ENCODE measurements at regions of chr1 and their contacts with region 1.

Region 1: DNA sequence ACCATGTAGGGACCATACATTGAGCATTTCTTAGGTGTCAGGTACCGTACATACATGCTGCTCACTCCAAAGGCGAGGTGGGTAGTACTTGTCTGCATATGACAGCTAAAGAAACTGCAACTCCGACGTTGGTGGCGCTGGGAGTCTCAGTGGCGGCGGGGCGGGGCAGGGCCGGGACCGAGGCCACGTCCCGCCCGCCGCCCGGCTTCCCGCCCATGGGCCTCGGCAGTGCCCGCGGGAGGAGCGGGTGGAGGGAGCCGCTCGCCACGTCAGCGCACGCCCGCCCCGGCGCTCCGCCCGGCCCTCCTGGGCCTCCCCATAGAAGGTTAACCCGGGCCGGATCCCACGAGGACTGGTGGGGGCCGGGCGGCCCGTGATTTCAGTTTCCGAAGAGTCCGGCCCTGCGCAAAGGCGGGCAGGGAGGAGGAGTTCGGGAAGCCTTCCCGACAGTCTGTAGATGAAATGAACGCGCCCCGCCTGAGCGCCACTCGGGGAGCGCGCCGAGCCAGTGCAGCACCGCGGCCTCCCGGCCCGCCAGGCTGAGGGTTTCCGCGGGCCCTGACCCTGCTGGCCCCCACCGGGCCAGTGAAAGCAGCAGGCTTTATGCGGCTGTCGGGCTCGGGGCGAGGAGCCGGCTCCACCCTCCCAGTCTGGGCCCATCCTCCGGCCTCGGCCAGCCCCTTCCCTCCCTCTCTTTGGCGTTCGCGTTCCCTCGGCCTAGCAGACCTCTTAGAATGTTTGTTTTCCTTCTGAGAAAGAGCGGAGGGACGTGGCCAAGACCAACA is 119.9 kb upstream of the JUN start:
- DNase-seq: peak; percentile 81
- H3K4me3 Mint-ChIP-seq: peak overlapping the region; percentile 76
- H3K27ac Mint-ChIP-seq: peak overlapping the region; percentile 87
- H3K4me1 Mint-ChIP-seq: peaks cover 32% of the 10 kb centered on the region
- H3K27me3 Mint-ChIP-seq: no peaks in the 10 kb centered on the region

Region 2: GRCh38 chr1:58546520-58547308 is 357.0 kb before region 1 on chr1 and contains the start of gene OMA1:
- intact Hi-C with region 1: loop called (anchors 10 kb)
- DNase-seq: peak; percentile 97
- H3K4me3 Mint-ChIP-seq: peak within 1 kb of the TSS; percentile 91
- H3K27ac Mint-ChIP-seq: peak within 1 kb of the TSS; percentile 95
- H3K4me1 Mint-ChIP-seq: peaks cover 19% of the 10 kb centered on the region
- H3K27me3 Mint-ChIP-seq: peaks cover 15% of the 10 kb centered on the region
- total RNA-seq, gene OMA1: 12.9 and 13.0 TPM in 2 replicates

Region 3: DNA sequence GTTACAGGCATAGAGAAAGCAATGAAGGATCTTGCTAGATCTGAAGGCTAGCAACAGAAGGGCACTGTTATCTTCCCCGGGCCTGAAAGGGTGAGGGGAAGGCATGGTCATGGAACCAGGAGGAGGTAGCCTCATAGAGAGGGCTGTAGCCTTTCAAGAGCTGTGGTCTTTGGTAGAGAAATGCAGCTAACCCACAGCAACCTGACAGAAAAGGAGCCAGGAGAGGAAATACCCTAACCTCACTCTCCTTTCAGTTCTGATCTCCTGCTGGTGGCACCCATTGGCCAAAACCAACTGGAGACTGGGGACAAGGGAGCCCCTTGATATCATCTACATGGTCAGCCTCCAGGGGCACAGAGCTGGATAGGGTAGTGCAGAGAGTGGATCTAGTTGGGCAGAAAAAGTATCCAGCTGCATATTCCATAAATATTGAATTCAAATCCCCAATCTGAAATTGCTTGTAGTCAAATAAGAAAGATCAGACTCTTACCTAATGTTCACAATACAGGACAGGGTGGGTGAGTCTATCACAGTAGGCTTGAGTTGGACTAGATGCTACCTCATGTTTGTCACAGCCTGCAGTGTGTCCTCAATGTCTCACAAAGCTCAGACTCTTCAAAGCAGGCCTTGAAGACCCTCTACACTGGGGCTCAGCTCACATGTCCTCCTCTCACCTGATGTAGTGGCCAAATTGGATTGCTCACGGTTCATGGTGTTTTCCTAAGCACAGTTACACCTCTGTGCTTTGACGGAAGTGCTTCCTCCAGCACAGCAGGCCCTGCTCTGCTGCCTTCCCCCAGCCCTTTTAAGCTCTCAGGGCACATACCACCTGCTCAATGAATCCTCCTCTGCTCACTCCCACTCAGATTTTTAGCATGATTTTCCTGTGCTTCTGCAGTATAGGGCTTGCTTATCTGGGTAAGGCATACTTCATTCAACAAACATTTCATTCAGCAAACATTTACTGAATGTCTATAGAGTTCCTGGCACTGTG is 45.7 kb before region 1 on chr1:
- intact Hi-C with region 1: loop called (anchors 5 kb)
- DNase-seq: peak; percentile 43
- H3K4me3 Mint-ChIP-seq: peak overlapping the region; percentile 61
- H3K27ac Mint-ChIP-seq: peak overlapping the region; percentile 95
- H3K4me1 Mint-ChIP-seq: peaks cover 74% of the 10 kb centered on the region
- H3K27me3 Mint-ChIP-seq: no peaks in the 10 kb centered on the region

Region 4: DNA sequence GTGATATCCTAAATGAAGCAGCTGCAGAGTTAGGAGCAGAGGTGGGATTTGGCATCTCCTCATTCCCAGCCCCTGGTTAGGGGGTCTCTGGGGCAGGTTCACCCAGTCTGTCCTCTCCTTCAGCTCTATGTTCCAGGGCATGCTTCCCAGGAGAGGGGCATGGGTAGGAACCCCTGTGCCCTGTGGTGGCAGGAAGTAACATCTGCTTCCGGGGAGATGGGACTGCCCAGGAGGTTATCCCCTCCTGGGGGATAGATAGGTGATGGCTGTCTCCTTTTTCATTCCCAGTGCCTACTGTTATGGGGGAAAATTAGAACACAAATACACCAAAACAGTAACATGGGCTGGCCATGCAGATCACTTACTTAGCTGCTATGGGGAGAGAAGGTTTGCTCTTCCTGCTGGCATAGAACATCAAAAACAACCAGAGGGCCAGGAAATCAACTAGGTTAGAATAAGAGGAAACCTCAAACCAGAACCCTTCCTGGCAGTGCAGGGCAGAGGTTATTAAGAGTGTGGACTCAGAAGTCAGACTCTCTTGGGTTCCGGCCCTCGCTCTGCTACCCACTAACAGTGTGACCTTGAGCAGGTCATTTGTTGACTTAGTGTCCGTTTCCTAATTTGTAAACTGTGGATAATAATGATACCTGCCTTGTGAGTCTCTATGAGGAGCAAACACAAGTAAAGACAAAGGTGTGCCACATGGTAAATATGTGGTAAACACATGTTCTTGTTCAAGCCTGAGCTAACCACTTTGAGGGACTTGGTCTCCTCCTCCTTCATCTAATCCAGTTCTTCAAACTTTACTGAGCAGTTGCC is 38.0 kb after region 1 on chr1:
- intact Hi-C with region 1: loop called (anchors 1 kb)
- DNase-seq: peak; percentile 46
- H3K4me3 Mint-ChIP-seq: peak overlapping the region; percentile 60
- H3K27ac Mint-ChIP-seq: peak overlapping the region; percentile 85
- H3K4me1 Mint-ChIP-seq: peaks cover 77% of the 10 kb centered on the region
- H3K27me3 Mint-ChIP-seq: no peaks in the 10 kb centered on the region

Region 5: DNA sequence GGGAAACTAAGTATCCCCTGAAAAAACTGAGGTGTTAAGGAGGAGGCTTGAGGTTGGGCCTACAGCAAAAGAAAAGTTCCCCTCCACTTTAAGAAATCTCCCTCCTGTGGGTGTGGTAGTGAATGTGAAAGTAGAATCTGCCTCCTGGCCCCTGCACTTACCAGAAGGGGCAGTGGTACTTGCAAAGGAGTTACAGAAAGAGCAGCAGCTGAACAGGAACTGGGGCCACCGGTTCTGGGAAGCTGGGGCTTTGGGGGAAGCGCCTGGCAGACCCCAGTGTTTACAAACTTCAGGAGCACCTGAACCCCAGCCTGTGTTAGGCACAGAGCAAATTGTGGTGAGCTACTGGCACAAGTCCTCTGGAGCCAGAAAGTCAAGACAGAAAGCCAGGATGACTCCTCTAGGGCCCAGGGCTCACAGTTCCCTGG is 143.0 kb after region 1 on chr1:
- intact Hi-C with region 1: loop called (anchors 1 kb)
- DNase-seq: peak; percentile 62
- H3K4me3 Mint-ChIP-seq: peak overlapping the region; percentile 67
- H3K27ac Mint-ChIP-seq: peak overlapping the region; percentile 71
- H3K4me1 Mint-ChIP-seq: peaks cover 77% of the 10 kb centered on the region
- H3K27me3 Mint-ChIP-seq: no peaks in the 10 kb centered on the region

Region 6: DNA sequence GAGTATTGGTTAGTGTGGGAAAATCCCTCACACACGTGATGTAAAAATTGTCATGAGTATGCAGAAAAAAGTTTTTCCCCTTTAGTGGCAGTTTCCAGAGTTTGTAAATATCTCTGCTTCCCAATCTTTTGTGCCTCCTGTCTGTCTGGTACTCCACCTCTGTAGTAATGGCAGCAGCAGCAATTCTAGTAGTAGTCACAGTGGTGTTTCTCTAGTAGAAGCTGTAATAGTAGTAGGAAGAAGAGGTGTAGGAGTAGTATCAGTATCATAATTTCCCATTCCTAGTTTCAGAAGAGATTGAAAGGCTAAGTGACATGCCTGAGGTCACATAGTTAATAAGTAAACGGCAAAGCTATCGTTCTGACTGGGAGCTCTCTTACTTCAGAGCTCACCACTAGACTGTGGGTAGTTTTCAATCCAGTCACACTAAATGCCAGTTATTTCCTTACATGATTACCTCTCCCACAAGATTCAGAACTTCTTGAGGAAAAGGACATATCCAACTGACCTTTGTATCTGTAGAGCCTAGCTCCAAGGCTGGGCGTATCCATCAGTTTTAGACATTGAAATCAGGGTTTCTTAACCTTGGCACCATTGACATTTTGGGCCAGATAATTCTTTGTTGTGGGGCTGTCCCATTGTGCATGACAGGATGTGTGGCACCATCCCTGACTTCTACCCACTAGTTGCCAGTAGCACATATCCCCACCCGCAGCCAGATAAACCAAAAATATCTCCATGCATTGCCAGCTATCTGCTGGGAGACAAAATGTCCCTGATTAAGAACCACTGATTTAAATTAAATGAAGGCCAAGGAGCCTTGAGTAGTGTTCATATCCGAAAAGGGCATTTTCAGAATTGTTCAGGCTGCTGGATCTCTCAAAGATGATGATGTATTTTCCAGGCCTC is 529.1 kb after region 1 on chr1:
- intact Hi-C with region 1: loop called (anchors 5 kb)
- DNase-seq: no peak
- H3K4me3 Mint-ChIP-seq: no peak overlapping the region
- H3K27ac Mint-ChIP-seq: peak overlapping the region; percentile 61
- H3K4me1 Mint-ChIP-seq: peaks cover 49% of the 10 kb centered on the region
- H3K27me3 Mint-ChIP-seq: no peaks in the 10 kb centered on the region

Measured in activated T-helper 1 cell treated with anti-CD3 and anti-CD28 coated beads, Interleukin-12 subunit alpha, Interleukin-12 subunit beta, Interleukin-2, Interleukin-4 antibody, amounts not matched to agents 30 ng/mL and 10 ng/mL and 1 ng/mL, durations not matched to agents 14 hours and 24 hours and 36 hours (primary cell).